ENCODE measurements at regions of chr11 and their contacts with region 1.

Region 1: GRCh38 chr11:72918851-72919250 is 104.6 kb downstream of the ATG16L2 start:
- DNase-seq: no peak
- H3K4me3 ChIP-seq: no peak overlapping the region
- H3K27ac ChIP-seq: peak overlapping the region; percentile 1 to 24
- H3K4me1 ChIP-seq: peaks cover 0 to 45% (median 0%) of the 10 kb centered on the region in 4 donors
- H3K27me3 ChIP-seq: no peaks in the 10 kb centered on the region
- CTCF ChIP-seq: no peak

Region 2: DNA sequence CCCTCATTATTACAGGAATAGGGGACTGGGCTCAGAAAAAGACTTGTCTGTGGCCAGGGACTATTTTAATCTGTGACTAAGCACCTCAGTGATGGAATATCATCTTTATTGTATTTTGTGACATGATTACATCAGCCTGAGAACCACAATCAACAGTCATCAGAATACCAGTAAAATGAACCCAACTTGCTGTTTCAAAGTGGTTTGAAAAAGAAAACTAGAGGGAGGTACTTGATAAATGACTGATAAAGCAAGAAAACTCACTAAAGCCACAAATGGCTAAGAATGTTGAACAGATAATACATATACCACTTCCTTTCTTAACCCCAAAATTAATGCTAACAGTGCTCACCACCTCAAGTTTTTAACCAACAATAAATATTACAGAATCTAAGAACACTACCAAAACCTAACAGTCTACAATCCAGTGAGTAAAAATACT is 51.1 kb after region 1 on chr11:
- intact Hi-C with region 1: loop called (anchors 10 kb)
- DNase-seq: no peak
- H3K4me3 ChIP-seq: no peak overlapping the region
- H3K27ac ChIP-seq: no peak overlapping the region
- H3K4me1 ChIP-seq: peaks cover 0 to 31% (median 0%) of the 10 kb centered on the region in 4 donors
- H3K27me3 ChIP-seq: no peaks in the 10 kb centered on the region
- CTCF ChIP-seq: no peak